Kidney (tissue), 22 donors: ENCODE measurements at regions of chr15 and their contacts with region 1.

Region 1: GRCh38 chr15:100635406-100636071 is 33.1 kb downstream of the ASB7 start:
- DNase-seq: no peak
- H3K4me3 ChIP-seq: no peak overlapping the region
- H3K27ac ChIP-seq: no peak overlapping the region
- H3K4me1 ChIP-seq: peaks cover 0 to 3% (median 0%) of the 10 kb centered on the region in 3 donors
- H3K27me3 ChIP-seq: no peaks in the 10 kb centered on the region
- CTCF ChIP-seq: no peak

Region 2: GRCh38 chr15:100873029-100873677 is 237.6 kb after region 1 on chr15:
- intact Hi-C with region 1: loop called (anchors 10 kb)
- DNase-seq: peak in 3 of 5 donors; percentile 74 to 92 (median 87)
- H3K4me3 ChIP-seq: no peak overlapping the region
- H3K27ac ChIP-seq: no peak overlapping the region
- H3K4me1 ChIP-seq: no peaks in the 10 kb centered on the region
- H3K27me3 ChIP-seq: peaks cover 2% of the 10 kb centered on the region
- CTCF ChIP-seq: peak; percentile 88